ENCODE measurements at regions of chr11 and their contacts with region 1.

Region 1: DNA sequence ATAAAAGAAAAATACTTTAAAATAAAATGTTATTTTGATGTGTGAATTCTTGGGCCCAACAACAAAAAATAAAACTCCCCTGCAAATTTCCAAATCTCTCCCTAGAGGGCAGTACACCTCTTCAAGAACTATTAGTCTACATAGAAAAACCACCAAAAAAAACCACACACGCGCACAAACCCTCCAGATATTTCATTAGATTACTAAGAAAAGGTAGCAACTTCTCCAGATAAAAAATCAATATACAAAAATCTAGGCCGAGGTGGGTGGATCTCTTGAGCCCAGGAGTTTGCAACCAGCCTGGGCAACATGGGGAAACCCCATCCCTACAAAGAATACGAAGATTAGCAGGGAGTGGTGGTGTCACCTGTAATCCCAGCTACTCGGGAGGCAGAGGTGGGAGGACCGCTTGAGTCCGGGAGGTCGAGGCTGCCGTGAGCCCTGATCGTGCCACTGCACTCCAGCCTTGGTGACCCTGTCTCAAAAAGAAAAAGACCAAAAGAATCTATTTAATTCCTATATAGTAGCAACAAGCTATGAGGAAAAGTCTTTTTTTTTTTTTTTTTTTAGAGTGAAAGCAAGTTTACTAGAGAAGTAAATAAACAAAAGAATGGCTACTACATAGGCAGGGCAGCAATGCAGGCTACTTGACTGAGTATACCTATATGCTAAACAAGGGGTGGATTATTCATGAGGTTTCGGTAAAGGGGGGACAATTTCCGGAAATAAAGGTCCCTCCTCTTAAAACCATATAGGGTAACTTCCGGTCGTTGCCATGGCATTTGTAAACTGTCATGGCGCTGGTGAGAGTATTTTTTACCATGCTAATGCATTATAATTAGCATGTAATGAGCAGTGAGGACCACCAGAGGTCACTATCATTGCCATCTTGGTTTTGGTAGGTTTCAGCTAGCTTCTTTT is 13.1 kb downstream of the B3GNT6 start:
- DNase-seq: peak; percentile 69 to 95
- ATAC-seq: peak; percentile 80 to 88
- H3K4me3 ChIP-seq: peak overlapping the region; percentile 55
- H3K27ac ChIP-seq: peak overlapping the region; percentile 64
- H3K4me1 ChIP-seq: peaks cover 12% of the 10 kb centered on the region; the same call in 2 of the 3 replicates
- CTCF ChIP-seq: peak; percentile 93
- EP300 ChIP-seq: no peak
- POLR2A ChIP-seq: no peak
- RAD21 ChIP-seq: peak; percentile 71 to 86

Region 2: DNA sequence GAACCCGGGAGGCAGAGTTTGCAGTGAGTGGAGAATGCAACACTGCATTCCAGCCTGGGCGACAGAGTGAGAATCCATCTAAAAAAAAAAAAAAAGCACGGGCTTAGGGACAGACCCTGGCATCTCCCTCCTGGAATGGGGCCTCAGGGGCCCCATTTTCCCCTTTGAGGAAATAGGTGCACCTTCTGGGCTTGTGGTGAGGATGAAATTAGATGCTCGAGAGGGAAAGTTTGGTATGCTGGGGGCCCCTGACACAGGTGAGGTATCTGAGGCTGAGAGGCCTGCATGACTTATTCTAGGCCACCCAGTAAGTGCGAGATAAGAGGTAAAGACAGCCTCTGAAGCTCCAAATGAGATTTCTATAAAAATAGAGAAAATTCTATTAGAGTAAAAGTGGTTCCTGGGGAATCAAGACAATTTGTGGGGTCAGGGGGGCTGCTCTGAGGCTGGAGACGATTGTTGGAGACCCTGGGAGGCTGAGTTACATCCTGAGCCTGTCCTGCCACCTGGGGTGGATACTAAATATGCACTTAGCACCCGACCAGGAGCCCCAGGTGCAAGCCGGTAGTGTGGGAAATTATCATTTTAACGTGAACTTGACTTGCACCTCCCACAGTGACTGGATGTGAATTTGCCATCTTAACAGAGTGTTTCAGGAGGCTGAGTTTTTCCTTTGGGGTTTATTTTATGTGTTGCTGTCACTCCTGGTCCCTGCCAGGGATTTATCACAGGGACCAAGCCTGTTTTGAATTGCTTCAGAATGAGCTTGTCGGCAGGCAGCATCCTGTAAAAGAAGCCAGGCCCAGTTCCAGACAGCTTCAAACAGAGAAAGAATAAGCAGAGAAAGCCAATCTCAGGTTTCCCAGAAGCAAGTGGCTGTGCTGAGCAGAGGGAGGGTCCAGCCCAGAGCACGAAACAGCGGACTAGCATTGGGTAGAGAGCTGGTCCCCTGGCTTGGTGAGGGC is 312.5 kb before region 1 on chr11:
- CTCF ChIA-PET with region 1: interaction called, 12 read pairs
- POLR2A ChIA-PET with region 1: no interaction called
- DNase-seq: no peak
- ATAC-seq: peak in 1 of 2 experiments; percentile 6; a peak in 2 of 6 replicates
- H3K4me3 ChIP-seq: no peak overlapping the region
- H3K27ac ChIP-seq: peak overlapping the region; percentile 77 to 79
- H3K4me1 ChIP-seq: peaks cover 24% of the 10 kb centered on the region
- CTCF ChIP-seq: no peak
- EP300 ChIP-seq: no peak
- POLR2A ChIP-seq: no peak
- RAD21 ChIP-seq: no peak

Region 3: DNA sequence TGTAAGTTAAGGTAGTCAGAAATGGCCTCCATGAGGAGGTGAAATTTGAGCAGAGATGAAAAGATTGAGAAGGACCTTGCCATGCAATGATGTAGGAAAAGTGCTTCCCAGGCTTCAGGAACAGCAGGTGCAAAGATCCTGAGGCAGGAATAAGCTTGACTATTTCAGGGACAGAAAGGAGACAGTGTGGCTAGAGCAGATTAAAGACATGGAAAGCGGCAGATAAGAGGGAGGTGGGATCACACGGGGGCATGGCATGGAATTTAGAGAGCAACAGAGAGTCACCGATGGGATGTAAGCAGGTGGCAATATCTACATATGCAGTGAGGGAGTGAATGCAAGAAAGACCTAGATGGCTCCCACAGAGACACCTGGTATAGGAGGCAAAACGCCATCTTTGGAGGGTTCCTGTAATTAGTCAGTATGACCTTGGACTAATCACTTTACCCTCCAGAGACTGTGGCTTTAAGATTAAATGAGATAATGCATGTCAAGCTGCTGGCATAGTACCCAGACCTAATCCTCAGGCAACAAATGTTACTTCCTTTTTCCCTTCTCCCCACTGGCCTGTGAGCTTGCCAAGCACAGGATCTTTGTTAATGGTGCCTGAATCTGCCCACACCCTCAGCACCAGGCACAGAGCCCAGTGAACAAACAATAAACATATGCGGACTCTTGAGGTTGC is 211.2 kb before region 1 on chr11:
- CTCF ChIA-PET with region 1: no interaction called
- POLR2A ChIA-PET with region 1: no interaction called
- DNase-seq: peak in 1 of 2 experiments; percentile 64
- ATAC-seq: peak; percentile 9 to 73; a peak in 3 of 6 replicates
- H3K4me3 ChIP-seq: no peak overlapping the region
- H3K27ac ChIP-seq: peak overlapping the region; percentile 14 to 39; a peak in 2 of 6 replicates
- H3K4me1 ChIP-seq: peaks cover 39% of the 10 kb centered on the region
- CTCF ChIP-seq: no peak
- EP300 ChIP-seq: no peak
- POLR2A ChIP-seq: no peak
- RAD21 ChIP-seq: no peak

Region 4: DNA sequence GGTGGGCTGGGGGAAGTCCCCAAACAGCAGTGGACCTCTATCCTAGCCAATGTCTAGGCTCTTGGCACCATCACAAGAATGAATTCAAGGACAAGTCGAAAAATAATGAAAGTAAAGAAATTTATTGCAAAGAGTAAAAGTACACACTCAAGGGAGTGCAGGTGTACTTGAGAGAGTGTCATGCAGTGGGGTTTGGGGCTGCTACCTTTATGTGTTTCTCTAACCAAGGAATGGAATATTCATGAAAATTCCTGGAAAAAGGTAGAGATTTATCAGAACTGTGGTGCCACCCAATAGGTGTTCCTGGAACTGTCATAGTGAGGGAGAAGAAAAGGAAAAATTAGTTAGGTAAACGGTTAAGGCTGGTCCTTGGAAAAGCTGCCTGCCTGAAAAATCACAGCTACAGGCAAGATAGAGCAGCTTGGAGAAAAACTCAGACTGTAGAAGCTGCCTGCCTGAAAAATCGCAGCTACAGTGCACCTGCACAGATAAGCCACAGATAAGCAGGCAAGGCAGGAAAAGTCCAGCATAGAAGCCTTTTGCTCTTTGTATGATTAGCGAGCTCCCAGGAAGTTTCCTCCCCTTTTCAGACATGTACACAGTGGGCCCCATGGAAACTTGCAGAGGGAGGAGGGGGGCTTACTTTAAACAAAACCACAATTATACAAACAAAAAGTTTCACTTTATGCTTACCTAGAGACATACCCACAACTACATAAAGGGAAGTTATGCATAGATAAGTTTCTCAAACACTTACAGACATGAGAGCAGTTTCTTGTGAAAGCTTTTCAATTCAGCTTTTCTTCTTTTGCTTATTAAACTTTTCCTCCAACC is 84.5 kb before region 1 on chr11:
- CTCF ChIA-PET with region 1: no interaction called
- POLR2A ChIA-PET with region 1: no interaction called
- DNase-seq: no peak
- ATAC-seq: no peak
- H3K4me3 ChIP-seq: no peak overlapping the region
- H3K27ac ChIP-seq: no peak overlapping the region
- H3K4me1 ChIP-seq: no peaks in the 10 kb centered on the region
- CTCF ChIP-seq: no peak
- EP300 ChIP-seq: no peak
- POLR2A ChIP-seq: no peak
- RAD21 ChIP-seq: no peak

Region 5: GRCh38 chr11:77057938-77058474 is 10.7 kb after region 1 on chr11:
- CTCF ChIA-PET with region 1: interaction called, 48 read pairs
- POLR2A ChIA-PET with region 1: no interaction called
- DNase-seq: no peak
- ATAC-seq: no peak
- H3K4me3 ChIP-seq: no peak overlapping the region
- H3K27ac ChIP-seq: no peak overlapping the region
- H3K4me1 ChIP-seq: peaks cover 13% of the 10 kb centered on the region
- CTCF ChIP-seq: no peak
- EP300 ChIP-seq: no peak
- POLR2A ChIP-seq: no peak
- RAD21 ChIP-seq: no peak

Region 6: GRCh38 chr11:77073328-77074001 is 26.2 kb after region 1 on chr11:
- CTCF ChIA-PET with region 1: interaction called, 14 read pairs
- POLR2A ChIA-PET with region 1: interaction called, 3 read pairs
- DNase-seq: peak; percentile 75 to 83
- ATAC-seq: peak; percentile 92
- H3K4me3 ChIP-seq: no peak overlapping the region
- H3K27ac ChIP-seq: peak overlapping the region; percentile 81 to 83
- H3K4me1 ChIP-seq: peaks cover 45% of the 10 kb centered on the region
- CTCF ChIP-seq: peak; percentile 37
- EP300 ChIP-seq: no peak
- POLR2A ChIP-seq: peak; percentile 29; the same call in 1 of the 2 replicates
- RAD21 ChIP-seq: peak; percentile 17 to 27; a peak in 1 of 5 replicates

Region 7: GRCh38 chr11:77091146-77091940 is 44.1 kb after region 1 on chr11:
- CTCF ChIA-PET with region 1: interaction called, 242 read pairs
- POLR2A ChIA-PET with region 1: interaction called, 10 read pairs
- DNase-seq: peak; percentile 85 to 90
- ATAC-seq: peak; percentile 89 to 95
- H3K4me3 ChIP-seq: no peak overlapping the region
- H3K27ac ChIP-seq: no peak overlapping the region
- H3K4me1 ChIP-seq: peaks cover 6% of the 10 kb centered on the region; the same call in 1 of the 3 replicates
- CTCF ChIP-seq: peak; percentile 95
- EP300 ChIP-seq: no peak
- POLR2A ChIP-seq: no peak
- RAD21 ChIP-seq: peak; percentile 95 to 96

Region 8: GRCh38 chr11:77107950-77108349 is 60.7 kb after region 1 on chr11:
- CTCF ChIA-PET with region 1: interaction called, 50 read pairs
- POLR2A ChIA-PET with region 1: interaction called, 6 read pairs
- DNase-seq: peak; percentile 43 to 73
- ATAC-seq: peak; percentile 46 to 76
- H3K4me3 ChIP-seq: no peak overlapping the region
- H3K27ac ChIP-seq: peak overlapping the region; percentile 69 to 83
- H3K4me1 ChIP-seq: peaks cover 58% of the 10 kb centered on the region
- CTCF ChIP-seq: no peak
- EP300 ChIP-seq: no peak
- POLR2A ChIP-seq: no peak
- RAD21 ChIP-seq: no peak

Region 9: DNA sequence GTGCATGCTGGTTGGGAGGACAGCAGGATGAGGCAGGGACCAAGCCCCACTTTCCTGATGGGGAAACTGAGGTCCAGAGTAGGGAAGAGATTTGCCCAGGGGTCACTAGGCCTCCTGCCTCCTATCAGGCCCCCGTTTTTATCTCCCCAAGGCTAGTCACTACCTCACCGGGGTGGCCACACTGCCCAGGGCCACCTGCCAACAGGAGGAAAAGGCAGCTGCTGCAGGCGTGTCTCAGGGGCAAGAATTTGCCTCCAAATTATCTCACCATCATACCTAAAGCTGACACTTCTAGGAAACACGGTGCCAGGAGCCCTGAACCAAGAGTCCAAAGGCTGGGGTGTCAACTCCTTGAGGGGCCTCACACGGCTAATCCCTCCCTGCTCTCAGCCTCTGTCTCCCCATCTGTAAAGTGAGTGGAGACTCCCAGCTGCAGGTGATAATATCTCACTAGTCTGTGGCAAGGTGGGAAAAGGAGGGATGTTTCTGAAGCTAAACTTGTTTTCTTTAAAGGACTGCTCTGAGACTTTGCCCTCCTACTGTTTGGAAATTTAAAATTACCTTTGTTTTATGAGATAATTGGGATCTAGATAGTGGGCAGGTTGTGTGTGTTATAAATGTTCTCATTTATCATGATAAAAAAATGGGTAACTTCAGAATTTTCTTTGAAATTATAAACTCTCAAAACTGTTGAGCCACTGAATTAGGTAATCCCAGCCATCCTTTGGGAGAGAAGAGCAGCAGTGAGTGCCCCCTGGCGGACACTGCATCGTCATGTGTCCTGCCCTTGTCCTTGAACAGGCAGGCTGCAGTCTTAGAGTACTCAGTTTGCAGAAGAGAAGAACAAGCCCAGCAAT is 140.7 kb after region 1 on chr11:
- CTCF ChIA-PET with region 1: interaction called, 13 read pairs
- POLR2A ChIA-PET with region 1: no interaction called
- DNase-seq: peak; percentile 77 to 94
- ATAC-seq: peak; percentile 36 to 64; a peak in 3 of 6 replicates
- H3K4me3 ChIP-seq: no peak overlapping the region
- H3K27ac ChIP-seq: no peak overlapping the region
- H3K4me1 ChIP-seq: no peaks in the 10 kb centered on the region
- CTCF ChIP-seq: peak; percentile 93
- EP300 ChIP-seq: no peak
- POLR2A ChIP-seq: no peak
- RAD21 ChIP-seq: peak; percentile 78

Region 10: GRCh38 chr11:77309401-77310085 is 262.3 kb after region 1 on chr11:
- CTCF ChIA-PET with region 1: no interaction called
- POLR2A ChIA-PET with region 1: no interaction called
- DNase-seq: no peak
- ATAC-seq: no peak
- H3K4me3 ChIP-seq: no peak overlapping the region
- H3K27ac ChIP-seq: no peak overlapping the region
- H3K4me1 ChIP-seq: no peaks in the 10 kb centered on the region
- CTCF ChIP-seq: no peak
- EP300 ChIP-seq: no peak
- POLR2A ChIP-seq: no peak
- RAD21 ChIP-seq: no peak